Right lobe of liver (tissue), 6 donors: ENCODE measurements at regions of chr9 and their contacts with region 1.

Region 1: DNA sequence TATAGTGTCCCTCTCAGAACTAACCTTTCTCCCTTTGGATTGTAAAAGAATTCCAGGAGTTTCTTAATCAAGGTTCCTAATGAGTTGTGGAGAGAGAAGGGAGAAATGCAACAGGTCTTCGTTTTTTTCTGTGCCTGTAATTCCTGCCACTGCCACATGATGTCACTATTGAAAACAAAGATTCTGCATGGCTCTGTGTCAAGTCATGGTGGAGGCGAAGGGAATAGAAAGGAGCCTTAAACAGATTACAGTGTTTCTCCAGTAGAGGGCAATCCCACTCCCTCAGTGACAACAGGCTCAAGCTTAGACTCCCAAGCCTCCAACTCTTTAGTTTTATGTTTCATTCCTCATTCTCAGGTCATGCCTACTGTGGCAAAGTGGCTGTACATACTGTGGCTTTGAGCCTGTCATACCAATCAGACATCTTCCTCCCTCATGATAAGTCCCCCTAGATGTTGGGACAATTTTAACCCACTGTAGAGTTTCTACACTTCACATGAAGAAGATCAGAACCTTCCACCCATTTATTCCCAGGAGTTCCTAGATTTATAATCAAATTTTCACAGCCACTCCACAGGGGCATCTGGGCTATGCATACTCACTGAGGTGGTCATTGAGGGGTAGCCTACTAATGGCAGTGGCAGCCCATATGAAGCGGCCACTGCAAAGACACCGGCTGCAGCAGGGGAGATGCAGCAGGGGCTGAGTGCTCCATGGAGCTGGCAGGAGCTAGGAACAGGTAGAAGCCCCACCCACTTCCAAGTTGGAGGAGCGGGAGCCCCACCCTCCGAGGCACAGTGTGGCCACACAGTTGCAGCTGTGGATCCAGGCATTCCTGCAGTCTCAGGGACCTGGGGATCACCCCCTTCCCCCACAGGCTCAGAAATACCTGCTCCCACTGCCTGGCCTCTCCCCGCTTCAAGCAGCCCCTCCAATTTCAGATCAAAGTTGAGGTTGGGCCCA is 97.4 kb upstream of the TRIM32 start:
- DNase-seq: no peak
- ATAC-seq: peak; percentile 28 to 84 (median 44)
- H3K4me3 ChIP-seq: no peak overlapping the region
- H3K27ac ChIP-seq: no peak overlapping the region
- H3K4me1 ChIP-seq: no peaks in the 10 kb centered on the region
- H3K27me3 ChIP-seq: no peaks in the 10 kb centered on the region
- CTCF ChIP-seq: peak; percentile 11 to 60 (median 34)
- POLR2A ChIP-seq: no peak

Region 2: DNA sequence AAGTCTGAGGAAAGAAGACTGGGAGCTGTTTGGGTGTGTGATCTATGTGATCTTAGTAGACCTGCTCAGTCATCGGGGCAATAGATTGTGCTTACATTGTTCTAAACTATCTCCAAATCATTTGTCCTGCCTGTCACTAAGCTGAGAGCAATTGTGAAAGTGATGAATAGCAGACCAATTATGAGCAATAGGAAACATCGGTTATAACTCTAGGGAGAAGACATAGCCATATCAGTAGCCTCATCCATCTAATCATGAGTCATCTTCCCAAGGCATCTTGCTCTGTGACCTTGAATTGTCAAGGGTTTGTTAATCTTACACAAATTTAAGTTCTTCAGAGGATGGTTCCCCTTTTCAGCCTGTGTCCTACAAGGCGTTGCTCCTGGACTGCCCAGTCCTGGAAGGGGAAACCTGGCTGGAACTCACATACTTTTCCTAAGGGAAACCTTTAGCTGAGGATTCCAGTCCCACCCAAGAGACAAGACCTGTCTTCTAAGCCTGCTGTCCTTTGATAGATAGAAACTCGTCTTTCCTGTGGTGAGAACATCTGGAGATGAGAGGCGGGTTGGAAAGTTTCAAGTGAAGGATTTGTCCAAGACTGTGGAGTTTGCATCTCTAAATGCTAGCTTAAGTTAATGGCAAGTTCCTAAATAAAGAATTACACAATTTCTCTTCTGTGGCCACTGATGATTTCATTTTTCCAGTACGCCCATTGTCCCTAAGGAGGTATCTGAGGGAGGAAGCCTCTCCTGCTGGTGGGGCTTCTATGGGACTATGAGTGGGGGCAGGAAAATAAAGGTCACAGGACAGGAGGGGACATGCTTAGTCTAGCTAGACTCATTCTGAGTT is 43.5 kb after region 1 on chr9:
- intact Hi-C with region 1: no loop called
- DNase-seq: no peak
- ATAC-seq: no peak
- H3K4me3 ChIP-seq: no peak overlapping the region
- H3K27ac ChIP-seq: no peak overlapping the region
- H3K4me1 ChIP-seq: no peaks in the 10 kb centered on the region
- H3K27me3 ChIP-seq: no peaks in the 10 kb centered on the region
- CTCF ChIP-seq: no peak
- POLR2A ChIP-seq: no peak

Region 3: GRCh38 chr9:116646661-116647512 is 57.2 kb after region 1 on chr9:
- intact Hi-C with region 1: loop called in 1 of 2 experiments (anchors 10 kb)
- DNase-seq: no peak
- ATAC-seq: peak; percentile 74 to 87 (median 80)
- H3K4me3 ChIP-seq: no peak overlapping the region
- H3K27ac ChIP-seq: no peak overlapping the region
- H3K4me1 ChIP-seq: no peaks in the 10 kb centered on the region
- H3K27me3 ChIP-seq: no peaks in the 10 kb centered on the region
- CTCF ChIP-seq: peak; percentile 48 to 69 (median 66)
- POLR2A ChIP-seq: no peak